Calu3 (cell line): ENCODE measurements at regions of chr4 and their contacts with region 1.

Region 1: GRCh38 chr4:170990989-170991589 is 822.1 kb upstream of the GALNTL6 start:
- DNase-seq: peak; percentile 22
- H3K4me3 Mint-ChIP-seq: no peak overlapping the region
- H3K27ac Mint-ChIP-seq: no peak overlapping the region
- H3K4me1 Mint-ChIP-seq: no peaks in the 10 kb centered on the region
- H3K27me3 Mint-ChIP-seq: no peaks in the 10 kb centered on the region
- CTCF ChIP-seq: no peak

Region 2: DNA sequence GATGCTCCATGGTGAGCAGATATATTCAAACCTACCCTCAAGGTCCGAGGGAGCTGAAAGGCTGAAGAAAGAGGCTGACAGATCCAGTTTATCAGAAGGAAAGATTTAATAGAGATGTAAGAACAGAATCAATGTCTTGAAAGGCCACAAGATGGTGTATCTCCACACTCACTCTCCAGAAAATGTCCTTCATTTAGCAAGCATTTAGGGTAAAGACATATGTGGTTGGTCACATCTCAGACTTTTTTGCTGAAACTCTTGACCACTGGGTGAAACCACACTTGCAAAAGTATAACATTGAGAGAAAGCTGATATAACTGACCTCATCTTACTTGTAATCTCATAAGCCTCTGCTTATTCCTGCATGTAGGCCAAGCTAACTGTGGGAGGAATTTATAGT is 76.3 kb after region 1 on chr4:
- CTCF ChIA-PET with region 1: no interaction called
- intact Hi-C with region 1: loop called (anchors 2 kb)
- DNase-seq: no peak
- H3K4me3 Mint-ChIP-seq: no peak overlapping the region
- H3K27ac Mint-ChIP-seq: no peak overlapping the region
- H3K4me1 Mint-ChIP-seq: no peaks in the 10 kb centered on the region
- H3K27me3 Mint-ChIP-seq: no peaks in the 10 kb centered on the region
- CTCF ChIP-seq: no peak

Region 3: DNA sequence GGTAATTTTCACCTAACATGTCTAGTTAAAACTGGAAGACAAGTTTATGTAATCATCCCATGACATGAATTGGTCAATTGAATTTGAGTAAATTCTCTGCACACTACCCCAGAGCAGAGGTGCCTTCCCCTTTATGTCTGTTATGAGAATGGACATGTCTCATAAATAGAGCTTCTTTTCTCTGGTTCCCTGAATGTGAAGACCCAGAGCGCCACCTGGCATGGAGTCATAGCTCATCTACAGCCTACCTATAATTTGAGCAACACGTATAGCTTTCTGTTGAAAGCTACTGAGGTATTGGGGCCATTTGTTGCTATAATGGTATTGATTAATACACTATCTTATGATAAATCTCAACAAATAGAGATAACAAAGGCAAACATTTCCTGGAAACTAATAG is 195.6 kb after region 1 on chr4:
- CTCF ChIA-PET with region 1: interaction called, 19 read pairs
- intact Hi-C with region 1: loop called (anchors 1 kb)
- DNase-seq: peak; percentile 35
- H3K4me3 Mint-ChIP-seq: no peak overlapping the region
- H3K27ac Mint-ChIP-seq: no peak overlapping the region
- H3K4me1 Mint-ChIP-seq: no peaks in the 10 kb centered on the region
- H3K27me3 Mint-ChIP-seq: no peaks in the 10 kb centered on the region
- CTCF ChIP-seq: no peak

Region 4: GRCh38 chr4:172202480-172203076 is 1211.5 kb after region 1 on chr4:
- CTCF ChIA-PET with region 1: no interaction called
- intact Hi-C with region 1: loop called (anchors 5 kb)
- DNase-seq: peak; percentile 2
- H3K4me3 Mint-ChIP-seq: no peak overlapping the region
- H3K27ac Mint-ChIP-seq: no peak overlapping the region
- H3K4me1 Mint-ChIP-seq: no peaks in the 10 kb centered on the region
- H3K27me3 Mint-ChIP-seq: no peaks in the 10 kb centered on the region
- CTCF ChIP-seq: no peak